Heart left ventricle (tissue), 16 donors: ENCODE measurements at regions of chr4 and their contacts with region 1.

Region 1: GRCh38 chr4:52038103-52038912 is at the start of gene SGCB:
- DNase-seq: peak; percentile 76 to 90 (median 80)
- ATAC-seq: peak; percentile 76 to 94 (median 92)
- H3K4me3 ChIP-seq: peak within 1 kb of the TSS; percentile 60 to 94 (median 78)
- H3K27ac ChIP-seq: peak within 1 kb of the TSS; percentile 62 to 92 (median 85)
- H3K4me1 ChIP-seq: peaks cover 3 to 31% (median 20%) of the 10 kb centered on the region in 12 donors
- H3K27me3 ChIP-seq: peaks cover 0 to 27% (median 0%) of the 10 kb centered on the region in 9 donors
- CTCF ChIP-seq: no peak
- POLR2A ChIP-seq: peak in 1 of 2 donors; percentile 49
- total RNA-seq, gene SGCB: 50.3 to 111 (median 73.8) TPM

Region 2: DNA sequence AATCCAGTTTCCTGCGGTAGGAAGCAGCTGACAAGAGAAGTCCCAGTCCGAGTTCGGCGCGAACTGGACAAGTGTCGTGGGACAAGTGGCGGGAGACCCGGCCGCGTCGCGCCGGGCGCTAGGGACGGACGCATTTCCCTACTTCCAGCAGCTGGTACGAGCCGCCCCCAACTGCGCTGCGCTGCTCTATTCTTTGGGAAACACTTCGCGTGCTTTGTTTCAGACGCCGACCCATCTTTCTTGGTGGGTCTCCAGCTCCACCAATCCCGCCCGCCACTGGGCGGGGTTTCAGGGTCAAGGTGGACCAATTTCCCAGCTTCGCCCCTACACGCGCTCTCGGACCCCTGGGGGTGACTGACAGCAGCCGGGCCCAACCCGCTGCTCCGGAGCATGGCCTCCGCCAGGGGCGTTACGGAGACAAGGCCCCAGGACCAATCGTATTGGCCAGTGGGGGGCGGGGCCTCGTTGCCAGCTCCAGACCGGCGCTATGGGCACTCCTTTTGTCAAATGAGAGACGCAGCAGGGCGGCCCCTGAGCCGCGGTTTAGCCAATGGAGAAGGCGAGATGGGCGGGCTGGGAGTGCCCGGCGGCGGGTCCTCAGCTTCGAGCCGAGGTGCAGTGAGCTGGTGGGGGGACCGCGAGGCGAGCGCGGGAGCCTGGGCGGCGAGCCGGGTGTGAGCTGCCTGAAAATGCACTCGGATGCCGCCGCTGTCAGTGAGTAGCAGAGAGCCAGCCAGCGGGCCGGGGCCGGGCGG is 195.6 kb before region 1 on chr4 and contains the start of gene DCUN1D4:
- intact Hi-C with region 1: loop called in 5 of 10 experiments (anchors 5 to 10 kb)
- DNase-seq: peak; percentile 100
- ATAC-seq: peak; percentile 93 to 98 (median 96)
- H3K4me3 ChIP-seq: peak within 1 kb of the TSS; percentile 68 to 95 (median 88)
- H3K27ac ChIP-seq: peak within 1 kb of the TSS; percentile 76 to 99 (median 93)
- H3K4me1 ChIP-seq: peaks cover 0 to 24% (median 11%) of the 10 kb centered on the region in 12 donors
- H3K27me3 ChIP-seq: no peaks in the 10 kb centered on the region
- CTCF ChIP-seq: peak; percentile 24 to 72 (median 46)
- POLR2A ChIP-seq: peak; percentile 31 to 71
- total RNA-seq, gene DCUN1D4: 16.6 to 54.0 (median 38.1) TPM

Region 3: DNA sequence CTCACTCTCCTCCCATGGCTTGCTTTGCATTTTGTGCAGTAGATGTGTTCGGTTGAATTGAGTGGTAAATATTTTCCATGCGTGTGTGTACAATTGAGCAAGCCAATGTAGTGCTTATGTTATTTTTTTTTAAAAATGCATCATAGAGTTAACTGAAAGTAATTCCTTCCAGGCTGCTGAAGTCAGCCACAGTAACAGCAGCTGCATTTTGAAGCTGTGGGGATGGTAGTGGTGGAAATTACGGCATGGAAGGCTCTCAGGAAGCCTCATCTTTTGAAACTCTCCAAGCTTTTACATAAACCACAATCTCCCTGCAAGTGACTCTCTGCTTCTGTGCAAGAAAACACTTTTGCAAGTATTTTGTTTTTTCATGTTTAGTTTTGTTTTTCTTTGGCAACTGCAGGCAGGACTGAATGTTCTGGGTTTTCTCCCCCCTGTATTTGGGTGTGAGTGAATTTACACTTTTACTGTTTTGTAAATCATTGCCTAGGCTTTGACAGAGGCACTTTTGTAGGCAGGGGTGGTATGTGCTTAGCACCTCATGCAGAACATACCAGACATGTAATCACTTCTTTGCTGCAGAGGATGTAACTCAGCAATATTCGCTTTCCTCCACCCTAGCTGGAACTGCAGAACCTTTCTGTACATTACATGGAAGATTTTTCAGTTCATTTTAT is 74.3 kb before region 1 on chr4:
- intact Hi-C with region 1: no loop called
- DNase-seq: no peak
- ATAC-seq: no peak
- H3K4me3 ChIP-seq: no peak overlapping the region
- H3K27ac ChIP-seq: no peak overlapping the region
- H3K4me1 ChIP-seq: peaks cover 0 to 2% (median 0%) of the 10 kb centered on the region in 12 donors
- H3K27me3 ChIP-seq: no peaks in the 10 kb centered on the region
- CTCF ChIP-seq: no peak
- POLR2A ChIP-seq: no peak

Region 4: DNA sequence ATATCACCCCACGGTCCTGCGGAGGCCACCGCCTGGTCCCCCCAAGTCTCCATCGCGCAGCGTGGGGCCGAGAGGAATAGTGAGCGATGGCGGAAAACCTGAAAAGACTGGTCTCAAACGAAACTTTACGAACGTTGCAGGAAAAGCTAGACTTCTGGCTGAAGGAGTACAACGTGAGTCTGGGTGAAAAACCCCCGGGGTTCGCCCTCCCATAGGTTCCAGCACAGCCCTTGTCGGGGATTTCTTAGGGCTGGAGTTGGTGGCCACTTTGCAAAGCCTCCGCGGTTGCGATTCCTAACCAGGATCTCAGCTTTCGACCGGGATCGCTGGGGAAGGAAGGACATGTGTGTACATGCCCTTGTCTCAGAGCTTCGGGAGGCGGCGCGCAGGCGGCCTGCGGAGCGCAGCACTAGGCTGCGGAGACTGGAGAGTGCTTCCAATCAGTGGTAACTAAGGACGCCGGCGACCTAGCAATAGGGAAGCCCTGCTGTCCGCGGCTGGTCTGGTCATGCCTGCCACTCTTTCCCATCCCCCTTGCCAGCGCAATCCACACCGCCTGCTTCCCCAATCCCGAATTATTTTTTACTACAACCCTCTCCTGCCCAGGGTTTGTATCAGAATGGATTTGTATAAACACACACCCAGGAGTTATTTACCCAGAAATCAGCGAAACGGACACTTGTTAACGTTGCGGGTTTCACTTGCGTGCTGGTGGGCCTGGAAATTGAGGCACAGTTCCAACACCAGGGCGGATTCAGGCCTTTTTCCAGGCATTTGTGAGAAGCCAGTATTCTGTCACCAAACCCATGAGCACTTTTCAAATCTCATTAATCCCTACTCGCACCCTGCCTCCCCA is 13.5 kb after region 1 on chr4:
- intact Hi-C with region 1: loop called in 2 of 10 experiments (anchors 1 to 2 kb)
- DNase-seq: peak; percentile 68 to 86 (median 79)
- ATAC-seq: peak; percentile 85 to 97 (median 92)
- H3K4me3 ChIP-seq: peak overlapping the region; percentile 39 to 81 (median 64)
- H3K27ac ChIP-seq: peak overlapping the region; percentile 8 to 80 (median 52)
- H3K4me1 ChIP-seq: peaks cover 0 to 19% (median 7%) of the 10 kb centered on the region in 12 donors
- H3K27me3 ChIP-seq: peaks cover 0 to 57% (median 0%) of the 10 kb centered on the region in 9 donors
- CTCF ChIP-seq: no peak
- POLR2A ChIP-seq: no peak

Region 5: GRCh38 chr4:52076731-52077130 is 38.4 kb after region 1 on chr4:
- intact Hi-C with region 1: no loop called
- DNase-seq: peak in 3 of 5 donors; percentile 20 to 70 (median 29)
- ATAC-seq: peak in 3 of 4 donors; percentile 57 to 80 (median 65)
- H3K4me3 ChIP-seq: peak overlapping the region in 8 of 12 donors; percentile 7 to 30 (median 13)
- H3K27ac ChIP-seq: no peak overlapping the region
- H3K4me1 ChIP-seq: peaks cover 0 to 6% (median 0%) of the 10 kb centered on the region in 12 donors
- H3K27me3 ChIP-seq: peaks cover 0 to 13% (median 0%) of the 10 kb centered on the region in 9 donors
- CTCF ChIP-seq: peak in 1 of 12 donors; percentile 6
- POLR2A ChIP-seq: no peak

Region 6: DNA sequence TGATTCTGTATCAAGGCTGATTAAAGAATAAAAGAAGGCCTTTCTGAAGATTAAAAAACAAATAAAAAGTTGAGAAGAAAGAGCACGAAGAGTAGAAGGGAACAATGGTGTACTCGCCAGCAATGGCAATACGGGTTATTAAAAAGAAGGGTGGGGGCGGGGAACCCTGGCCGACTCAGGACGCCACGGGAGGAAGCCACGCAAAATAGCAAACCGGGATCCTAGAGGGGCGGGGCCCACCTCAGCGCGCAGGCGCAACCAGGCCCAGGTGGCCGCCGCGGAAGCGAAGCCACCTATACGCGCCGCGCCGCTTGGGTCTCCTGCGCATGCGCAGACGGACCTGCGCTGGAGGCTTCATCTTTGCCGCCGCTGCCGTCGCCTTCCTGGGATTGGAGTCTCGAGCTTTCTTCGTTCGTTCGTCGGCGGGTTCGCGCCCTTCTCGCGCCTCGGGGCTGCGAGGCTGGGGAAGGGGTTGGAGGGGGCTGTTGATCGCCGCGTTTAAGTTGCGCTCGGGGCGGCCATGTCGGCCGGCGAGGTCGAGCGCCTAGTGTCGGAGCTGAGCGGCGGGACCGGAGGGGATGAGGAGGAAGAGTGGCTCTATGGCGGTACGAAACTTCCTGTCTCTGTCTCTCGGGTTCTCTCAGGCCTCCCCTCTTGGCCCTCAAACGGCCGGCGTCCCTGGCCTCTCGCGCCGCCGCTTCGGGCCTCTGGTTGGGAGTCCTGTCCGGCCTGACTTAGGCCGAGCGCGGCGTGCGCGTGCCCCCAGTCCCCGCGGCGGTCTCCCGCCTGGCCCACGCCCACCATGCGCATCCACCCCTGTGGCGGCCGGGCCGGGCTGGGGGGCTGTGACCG is 1339.2 kb after region 1 on chr4 and contains the start of gene FIP1L1:
- intact Hi-C with region 1: loop called in 1 of 10 experiments (anchors 10 kb)
- DNase-seq: peak; percentile 93 to 98 (median 96)
- ATAC-seq: peak; percentile 99 to 100 (median 100)
- H3K4me3 ChIP-seq: peak within 1 kb of the TSS; percentile 50 to 97 (median 88)
- H3K27ac ChIP-seq: peak within 1 kb of the TSS; percentile 73 to 94 (median 90)
- H3K4me1 ChIP-seq: peaks cover 0 to 26% (median 20%) of the 10 kb centered on the region in 12 donors
- H3K27me3 ChIP-seq: no peaks in the 10 kb centered on the region
- CTCF ChIP-seq: no peak
- POLR2A ChIP-seq: peak in 1 of 2 donors; percentile 77
- total RNA-seq, gene FIP1L1: 23.5 to 46.2 (median 32.8) TPM